ENCODE measurements at regions of chr17 and their contacts with region 1.

Region 1: DNA sequence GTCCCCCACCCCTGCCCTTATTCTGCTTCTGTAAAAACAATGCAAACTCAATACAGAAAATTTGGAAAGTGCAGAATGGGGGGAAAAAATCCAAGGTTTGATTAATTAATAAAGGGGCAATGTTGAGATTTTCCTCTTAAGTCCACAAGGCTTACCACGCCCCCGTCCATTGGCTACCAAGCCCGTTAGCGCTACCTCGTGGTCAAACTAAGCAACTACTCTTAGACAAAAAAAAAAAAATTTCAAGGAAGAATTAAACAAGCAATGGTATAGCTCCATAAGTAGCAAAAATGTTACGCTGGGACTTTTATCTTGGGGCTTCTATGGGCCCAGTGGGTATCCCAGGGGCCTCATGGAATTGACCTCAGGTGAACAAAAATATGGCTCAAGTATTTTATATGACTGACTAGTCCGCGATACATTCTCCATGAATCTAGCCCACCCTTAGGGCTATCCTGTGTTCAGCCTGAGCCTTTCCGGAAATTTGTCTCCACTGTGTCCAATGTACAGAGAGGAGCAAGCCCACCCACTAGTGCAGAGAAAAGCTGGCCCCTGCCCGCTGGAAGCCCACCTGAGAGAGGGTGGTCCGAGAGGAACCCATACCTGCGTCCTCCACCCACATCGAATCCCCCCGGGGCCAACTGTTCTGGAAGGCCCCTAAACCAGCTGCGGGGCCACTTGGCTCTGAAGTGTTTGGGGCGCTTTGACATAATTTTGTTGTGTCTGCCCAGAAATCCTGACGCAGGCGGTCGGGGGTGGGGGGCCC is 19.1 kb upstream of the TEX2 start:
- DNase-seq: peak; percentile 80

Region 2: GRCh38 chr17:63929860-63930766 is 352.0 kb before region 1 on chr17:
- intact Hi-C with region 1: loop called (anchors 10 kb)
- DNase-seq: no peak

Region 3: DNA sequence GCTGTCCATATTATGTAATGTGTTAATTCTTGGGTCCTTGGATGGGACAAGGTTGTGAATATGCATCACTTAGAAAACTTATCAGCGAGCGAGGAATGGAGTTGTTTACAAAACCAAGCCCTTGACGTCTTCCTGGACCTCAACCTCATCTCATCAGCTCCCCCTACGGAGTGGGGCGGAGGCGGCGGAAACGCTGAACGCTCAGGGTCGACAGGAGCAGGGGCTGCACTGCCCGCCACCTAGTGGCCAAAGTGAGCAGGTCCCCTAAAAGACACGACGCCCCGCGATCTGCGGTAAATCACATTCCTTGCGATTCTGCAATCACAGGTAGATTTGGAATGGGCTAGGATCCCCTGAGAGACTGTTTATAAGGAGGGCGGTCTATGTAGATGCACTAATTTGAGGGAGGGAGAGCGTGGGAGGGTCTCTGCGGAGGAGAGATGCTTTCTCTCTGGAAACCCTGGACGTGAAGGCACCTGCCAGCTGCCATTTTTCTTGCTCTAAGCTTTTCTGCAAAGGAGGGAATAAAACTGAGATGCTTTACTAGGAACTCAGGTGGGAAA is 256.3 kb before region 1 on chr17:
- intact Hi-C with region 1: loop called (anchors 2 kb)
- DNase-seq: peak; percentile 86

Region 4: DNA sequence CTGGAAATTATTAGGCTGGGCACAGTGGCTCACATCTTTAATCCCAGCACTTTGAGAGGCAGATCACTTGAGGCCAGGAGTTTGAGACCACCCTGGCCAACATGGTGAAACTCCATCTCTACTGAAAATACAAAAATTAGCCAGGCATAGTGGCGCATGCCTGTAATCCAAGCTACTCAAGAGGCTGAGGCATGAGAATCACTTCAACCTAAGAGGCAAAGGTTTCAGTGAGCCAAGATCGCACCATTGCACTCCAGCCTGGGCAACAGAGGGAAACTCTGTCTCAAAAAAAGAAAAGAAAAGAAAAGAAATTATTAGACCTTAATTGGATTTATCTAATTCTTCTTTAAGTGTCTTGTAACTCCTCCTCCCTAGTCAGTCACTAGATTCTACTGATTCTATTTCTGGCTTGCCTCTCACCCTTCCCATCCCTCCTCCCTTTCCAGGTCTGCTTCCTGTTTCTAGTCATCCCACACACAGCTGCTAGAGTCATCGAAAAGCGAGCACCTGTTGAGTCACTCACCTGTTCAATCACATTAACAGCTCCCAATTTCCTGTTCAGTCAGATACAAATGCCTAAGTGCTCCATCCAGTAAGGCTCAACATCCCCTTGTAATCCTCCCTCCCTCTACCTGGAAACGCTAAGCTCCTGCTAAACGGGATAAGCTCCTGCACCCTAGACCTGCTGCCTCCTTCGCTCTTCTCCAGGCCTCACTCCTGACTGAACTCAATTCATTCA is 186.8 kb before region 1 on chr17:
- intact Hi-C with region 1: no loop called
- DNase-seq: no peak

Region 5: GRCh38 chr17:64129764-64130558 is 152.2 kb before region 1 on chr17 and contains the start of gene ERN1:
- intact Hi-C with region 1: loop called (anchors 5 kb)
- DNase-seq: peak; percentile 98
- total RNA-seq, gene ERN1: 6.9 TPM

Region 6: DNA sequence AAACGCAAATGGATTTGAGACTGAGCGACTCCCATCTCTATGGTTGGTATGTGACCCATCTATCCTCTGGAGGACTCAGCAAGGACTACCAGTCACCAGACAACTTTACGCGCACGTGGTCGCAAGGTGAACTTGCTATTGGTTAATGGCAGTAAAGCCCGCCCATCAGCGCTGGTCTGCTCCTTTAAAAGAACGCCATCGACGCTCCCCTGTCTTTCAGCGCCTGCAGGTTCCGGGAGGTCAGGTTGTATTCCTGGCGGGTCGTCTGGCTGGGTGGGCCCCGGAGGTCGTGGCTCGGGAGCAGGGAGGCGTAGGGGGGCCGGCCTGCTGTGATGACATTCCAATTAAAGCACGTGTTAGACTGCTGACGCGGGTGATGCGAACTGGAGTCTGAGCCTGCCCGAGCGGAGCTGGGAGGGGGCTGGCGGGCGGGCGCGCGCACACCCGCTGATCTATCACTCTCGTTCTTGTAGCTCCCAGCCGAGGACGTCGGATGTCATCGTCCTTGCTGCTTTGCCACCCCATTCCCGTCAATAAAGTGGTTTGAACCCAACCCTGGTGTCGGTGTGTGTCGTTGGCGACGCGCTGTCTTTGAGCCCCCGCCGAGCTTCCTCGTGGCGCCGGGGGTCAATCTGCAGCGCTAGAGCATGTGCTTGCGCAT is 136.3 kb before region 1 on chr17:
- intact Hi-C with region 1: loop called (anchors 2 kb)
- DNase-seq: peak; percentile 99

Region 7: DNA sequence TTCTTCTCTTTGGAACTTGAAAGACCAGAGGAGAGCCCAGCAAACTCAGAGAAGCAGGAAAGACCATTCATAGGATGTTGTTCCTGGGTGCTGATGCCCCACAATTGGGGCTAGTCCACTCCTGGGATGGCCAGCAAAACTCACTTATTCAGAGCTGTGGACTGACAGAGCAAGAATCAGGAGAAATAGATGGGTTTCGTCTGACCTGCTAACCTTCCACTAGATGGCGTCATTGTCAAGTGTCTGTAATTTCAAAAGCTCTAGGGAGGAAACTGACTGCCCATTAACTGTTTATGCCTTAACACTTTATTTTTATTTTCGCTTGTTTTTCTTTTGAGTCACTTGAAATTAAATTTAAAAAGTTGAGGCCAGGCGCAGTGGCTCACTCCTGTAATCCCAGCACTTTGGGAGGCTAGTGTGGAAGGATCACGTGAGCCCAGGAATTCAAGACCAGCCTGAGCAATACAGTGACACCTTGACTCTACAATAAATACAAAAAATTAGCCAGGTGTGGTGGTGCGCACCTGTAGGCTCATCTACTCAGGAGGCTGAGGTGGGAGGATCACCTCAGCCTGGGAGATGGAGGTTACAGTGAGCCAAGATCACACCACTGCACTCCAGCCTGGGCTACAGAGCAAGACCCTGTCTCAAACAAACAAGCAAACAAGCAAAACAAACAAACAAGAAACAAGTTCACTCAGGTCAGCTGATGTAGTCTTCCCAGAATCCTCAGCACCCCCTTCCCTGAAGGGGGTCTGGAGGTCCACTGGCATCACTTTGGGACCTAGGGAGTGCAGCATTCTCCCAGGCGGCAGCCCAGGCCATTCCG is 138.2 kb after region 1 on chr17:
- intact Hi-C with region 1: no loop called
- DNase-seq: no peak

Measured in cardiac septum (tissue), 1 donor.